Prostate gland (tissue), 2 donors: ENCODE measurements at regions of chr2 and their contacts with region 1.

Region 1: DNA sequence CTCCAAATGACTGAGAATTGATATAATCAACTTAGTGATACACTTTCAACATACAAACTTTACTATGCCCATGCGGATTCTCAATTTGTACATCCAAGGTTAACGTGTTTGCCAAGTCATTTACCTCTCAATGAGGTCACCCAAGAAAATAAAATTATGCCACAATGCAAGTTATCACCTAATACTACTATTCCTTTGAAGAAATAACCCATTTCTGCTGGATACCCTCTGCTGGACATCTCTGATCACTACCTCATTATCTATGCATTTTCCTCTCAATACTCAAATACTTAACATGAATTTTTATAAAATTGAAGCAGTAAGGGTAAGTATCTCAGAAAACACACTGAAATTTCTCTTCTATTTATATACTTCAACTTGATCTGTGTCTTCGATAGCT is 12.7 kb downstream of the HNRNPLL start:
- DNase-seq: no peak
- H3K4me3 ChIP-seq: no peak overlapping the region
- H3K27ac ChIP-seq: no peak overlapping the region
- H3K4me1 ChIP-seq: no peaks in the 10 kb centered on the region
- H3K27me3 ChIP-seq: no peaks in the 10 kb centered on the region
- CTCF ChIP-seq: no peak
- POLR2A ChIP-seq: no peak

Region 2: GRCh38 chr2:38496927-38497669 is 93.0 kb before region 1 on chr2:
- intact Hi-C with region 1: no loop called
- DNase-seq: no peak
- H3K4me3 ChIP-seq: no peak overlapping the region
- H3K27ac ChIP-seq: no peak overlapping the region
- H3K4me1 ChIP-seq: no peaks in the 10 kb centered on the region
- H3K27me3 ChIP-seq: no peaks in the 10 kb centered on the region
- CTCF ChIP-seq: no peak
- POLR2A ChIP-seq: no peak

Region 3: DNA sequence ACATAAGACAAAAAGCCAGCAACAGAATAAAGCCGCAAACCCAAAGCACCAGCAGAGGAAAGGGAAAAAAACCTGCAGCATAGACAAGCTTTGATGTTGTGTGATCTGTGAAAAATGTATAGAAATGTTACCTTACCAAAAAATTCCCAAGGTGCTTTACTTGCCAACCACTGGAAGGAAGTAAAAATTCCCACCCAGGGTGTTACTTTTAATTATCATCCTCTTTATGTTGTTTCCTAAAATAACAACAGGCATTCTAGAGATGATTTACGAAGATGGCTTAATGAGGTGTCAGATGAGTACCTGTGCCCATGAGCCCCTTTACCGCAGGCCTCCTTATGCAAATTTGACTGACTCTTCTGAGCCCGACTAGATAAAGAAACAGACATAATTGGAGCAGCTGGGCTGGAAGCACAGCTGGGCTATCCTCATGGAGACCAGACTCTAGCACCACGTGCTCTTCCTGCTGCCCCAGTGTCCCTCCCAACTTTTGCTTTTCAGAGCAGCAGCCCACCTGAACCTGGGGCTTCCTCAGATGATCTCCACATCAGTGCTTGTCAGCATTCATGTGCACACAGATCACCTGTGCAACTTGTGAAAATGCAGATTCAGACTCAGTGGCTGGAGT is 119.6 kb after region 1 on chr2:
- intact Hi-C with region 1: loop called (anchors 2 kb)
- DNase-seq: no peak
- H3K4me3 ChIP-seq: no peak overlapping the region
- H3K27ac ChIP-seq: no peak overlapping the region
- H3K4me1 ChIP-seq: no peaks in the 10 kb centered on the region
- H3K27me3 ChIP-seq: no peaks in the 10 kb centered on the region
- CTCF ChIP-seq: no peak
- POLR2A ChIP-seq: no peak